BJ (cell line): ENCODE measurements at regions of chr6 and their contacts with region 1.

Region 1: DNA sequence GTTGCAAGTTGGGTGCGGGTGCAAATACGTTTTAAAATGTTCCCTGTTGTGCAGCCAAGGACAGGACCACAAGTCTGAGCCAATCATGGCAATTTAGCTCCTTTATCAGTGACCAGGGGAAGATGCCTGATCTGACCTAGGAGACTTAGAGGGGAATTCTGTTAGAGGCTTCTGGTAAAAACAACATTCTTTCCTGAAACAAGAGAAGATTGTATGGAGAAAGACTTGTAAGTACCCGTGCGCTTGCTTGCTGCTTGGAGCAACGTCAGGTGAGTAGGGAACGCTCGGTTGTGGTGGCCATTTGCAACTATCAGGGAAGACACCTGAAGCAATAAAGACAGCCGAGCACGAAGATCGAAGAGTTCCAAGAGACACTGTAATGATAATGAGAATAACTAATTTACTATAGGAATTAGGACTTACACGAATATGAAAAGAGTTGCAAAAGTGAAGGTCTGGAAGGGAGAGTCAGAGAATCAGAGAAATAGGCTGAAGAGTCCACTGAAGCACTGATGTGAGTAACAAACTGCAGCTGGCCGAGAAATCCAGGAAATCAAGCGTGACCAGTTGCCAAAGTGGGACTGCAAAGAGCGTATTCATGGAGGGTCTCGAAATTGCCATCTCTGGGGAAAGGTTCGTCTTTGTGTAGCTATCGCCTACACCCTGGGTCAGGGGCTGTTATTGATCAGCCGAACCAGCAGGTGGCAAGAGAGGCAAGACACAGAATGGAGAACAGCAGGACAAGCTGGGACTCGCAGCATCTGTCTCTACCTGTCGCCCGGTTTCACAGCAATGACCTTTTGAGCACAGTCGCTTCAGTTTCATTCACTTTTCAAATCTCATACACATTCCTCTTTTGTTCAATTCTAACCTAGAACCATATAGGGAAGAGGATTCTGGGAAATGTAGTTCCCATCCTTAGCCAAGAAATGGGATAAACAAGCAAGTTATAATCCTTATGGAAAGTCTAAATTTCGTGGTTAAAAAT is 26.1 kb downstream of the LOC128125822 start:
- DNase-seq: no peak
- H3K4me3 ChIP-seq: peak overlapping the region; percentile 49
- H3K27me3 ChIP-seq: no peaks in the 10 kb centered on the region
- CTCF ChIP-seq: peak; percentile 90

Region 2: DNA sequence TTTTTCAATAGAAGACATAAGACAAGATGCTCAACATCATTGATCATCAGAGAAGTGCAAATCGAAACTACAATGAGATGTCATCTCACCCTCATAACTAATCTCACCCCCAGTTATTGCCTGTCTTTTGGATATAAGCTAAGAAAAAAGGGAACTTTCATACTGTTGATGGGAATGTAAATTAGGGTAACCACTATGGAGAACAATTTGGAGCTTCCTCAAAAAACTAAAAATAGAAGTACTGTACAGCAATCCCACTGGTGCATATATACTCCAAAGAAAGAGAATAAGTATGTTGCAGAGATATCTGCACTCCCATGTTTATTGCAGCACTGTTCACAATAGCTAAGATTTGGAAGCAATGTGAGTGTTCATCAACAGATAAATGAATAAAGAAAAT is 10.9 kb after region 1 on chr6:
- CTCF ChIA-PET with region 1: interaction called, 26 read pairs
- POLR2A ChIA-PET with region 1: no interaction called
- DNase-seq: no peak
- H3K4me3 ChIP-seq: no peak overlapping the region
- H3K27me3 ChIP-seq: no peaks in the 10 kb centered on the region
- CTCF ChIP-seq: no peak

Region 3: DNA sequence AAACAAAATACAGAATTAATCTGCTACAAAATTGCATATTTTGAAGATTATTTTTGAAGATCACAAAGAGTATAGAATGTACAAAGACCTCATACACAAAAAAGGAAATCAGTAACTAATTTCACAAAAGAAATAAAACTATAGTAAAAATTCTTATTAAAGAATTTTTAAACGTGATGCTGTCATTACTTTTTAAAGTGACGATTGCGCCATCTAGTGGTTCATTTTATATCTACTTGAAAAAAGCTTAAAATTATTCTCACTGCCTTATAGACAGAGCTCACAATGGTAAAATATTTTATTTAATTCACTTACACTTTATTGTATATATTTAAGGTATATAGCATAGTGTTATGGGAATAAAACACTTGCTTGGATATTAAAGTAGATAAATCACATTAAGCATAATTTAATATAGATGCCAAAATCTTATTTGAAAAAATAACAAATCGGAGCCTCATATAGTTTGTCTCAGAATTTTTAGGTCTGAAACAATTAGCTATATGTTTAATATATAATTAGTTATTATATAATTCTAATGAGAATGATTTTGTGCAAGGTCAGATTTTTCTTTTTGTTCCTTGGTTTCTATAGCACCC is 166.1 kb after region 1 on chr6:
- CTCF ChIA-PET with region 1: interaction called, 34 read pairs
- POLR2A ChIA-PET with region 1: no interaction called
- DNase-seq: no peak
- H3K4me3 ChIP-seq: no peak overlapping the region
- H3K27me3 ChIP-seq: no peaks in the 10 kb centered on the region
- CTCF ChIP-seq: peak; percentile 31; the same call in 1 of the 2 replicates